ENCODE measurements at regions of chr15 and their contacts with region 1.

Region 1: GRCh38 chr15:69475769-69476358 is 23.2 kb downstream of the RPLP1 start:
- DNase-seq: peak; percentile 72
- H3K4me3 Mint-ChIP-seq: no peak overlapping the region
- H3K27ac Mint-ChIP-seq: no peak overlapping the region
- H3K4me1 Mint-ChIP-seq: no peaks in the 10 kb centered on the region
- H3K27me3 Mint-ChIP-seq: no peaks in the 10 kb centered on the region
- CTCF ChIP-seq: peak; percentile 96

Region 2: GRCh38 chr15:69265347-69265955 is 210.4 kb before region 1 on chr15:
- CTCF ChIA-PET with region 1: no interaction called
- POLR2A ChIA-PET with region 1: no interaction called
- intact Hi-C with region 1: no loop called
- DNase-seq: peak; percentile 63
- H3K4me3 Mint-ChIP-seq: no peak overlapping the region
- H3K27ac Mint-ChIP-seq: no peak overlapping the region
- H3K4me1 Mint-ChIP-seq: no peaks in the 10 kb centered on the region
- H3K27me3 Mint-ChIP-seq: no peaks in the 10 kb centered on the region
- CTCF ChIP-seq: peak; percentile 65

Region 3: GRCh38 chr15:69407753-69408385 is 68.0 kb before region 1 on chr15:
- CTCF ChIA-PET with region 1: no interaction called
- POLR2A ChIA-PET with region 1: no interaction called
- intact Hi-C with region 1: no loop called
- DNase-seq: no peak
- H3K4me3 Mint-ChIP-seq: no peak overlapping the region
- H3K27ac Mint-ChIP-seq: no peak overlapping the region
- H3K4me1 Mint-ChIP-seq: peaks cover 10% of the 10 kb centered on the region
- H3K27me3 Mint-ChIP-seq: no peaks in the 10 kb centered on the region
- CTCF ChIP-seq: no peak

Region 4: DNA sequence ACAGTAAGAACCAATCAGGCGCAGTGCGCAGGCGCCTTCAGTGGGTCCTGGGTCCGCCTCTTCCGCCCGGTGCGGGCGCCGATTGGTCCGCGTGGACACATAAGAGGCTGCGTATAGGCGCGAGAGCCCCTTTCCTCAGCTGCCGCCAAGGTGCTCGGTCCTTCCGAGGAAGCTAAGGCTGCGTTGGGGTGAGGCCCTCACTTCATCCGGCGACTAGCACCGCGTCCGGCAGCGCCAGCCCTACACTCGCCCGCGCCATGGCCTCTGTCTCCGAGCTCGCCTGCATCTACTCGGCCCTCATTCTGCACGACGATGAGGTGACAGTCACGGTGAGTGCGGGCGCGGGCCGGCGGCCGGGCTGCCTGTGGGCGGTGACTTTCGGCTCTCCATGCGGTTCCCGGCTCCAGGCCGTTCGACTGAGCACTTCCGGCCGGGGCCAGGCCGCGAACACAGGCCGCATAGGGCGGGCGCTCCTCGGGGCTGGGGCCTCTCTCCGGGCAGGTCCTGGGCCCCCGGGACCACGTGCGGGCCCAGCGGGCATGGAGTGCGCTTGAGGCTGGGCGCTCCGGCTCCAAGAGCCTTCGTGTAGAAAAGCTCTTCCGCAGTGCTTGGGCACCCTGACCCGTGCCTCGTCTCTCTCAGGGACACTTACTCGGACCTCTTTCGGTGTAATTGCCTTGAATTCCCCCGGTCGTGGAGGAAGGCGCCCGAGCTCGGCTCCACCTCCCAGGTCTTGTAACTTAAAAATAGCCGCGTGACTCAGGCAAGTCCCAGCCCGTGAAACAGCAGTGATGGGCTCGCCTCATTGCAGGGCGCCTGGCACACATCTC is 23.0 kb before region 1 on chr15 and contains the start of gene RPLP1:
- CTCF ChIA-PET with region 1: no interaction called
- POLR2A ChIA-PET with region 1: no interaction called
- intact Hi-C with region 1: no loop called
- DNase-seq: peak; percentile 95
- H3K4me3 Mint-ChIP-seq: peak within 1 kb of the TSS; percentile 95
- H3K27ac Mint-ChIP-seq: peak within 1 kb of the TSS; percentile 95
- H3K4me1 Mint-ChIP-seq: peaks cover 8% of the 10 kb centered on the region
- H3K27me3 Mint-ChIP-seq: no peaks in the 10 kb centered on the region
- CTCF ChIP-seq: no peak
- total RNA-seq, gene RPLP1: 2,295 and 2,621 TPM in 2 replicates

Region 5: DNA sequence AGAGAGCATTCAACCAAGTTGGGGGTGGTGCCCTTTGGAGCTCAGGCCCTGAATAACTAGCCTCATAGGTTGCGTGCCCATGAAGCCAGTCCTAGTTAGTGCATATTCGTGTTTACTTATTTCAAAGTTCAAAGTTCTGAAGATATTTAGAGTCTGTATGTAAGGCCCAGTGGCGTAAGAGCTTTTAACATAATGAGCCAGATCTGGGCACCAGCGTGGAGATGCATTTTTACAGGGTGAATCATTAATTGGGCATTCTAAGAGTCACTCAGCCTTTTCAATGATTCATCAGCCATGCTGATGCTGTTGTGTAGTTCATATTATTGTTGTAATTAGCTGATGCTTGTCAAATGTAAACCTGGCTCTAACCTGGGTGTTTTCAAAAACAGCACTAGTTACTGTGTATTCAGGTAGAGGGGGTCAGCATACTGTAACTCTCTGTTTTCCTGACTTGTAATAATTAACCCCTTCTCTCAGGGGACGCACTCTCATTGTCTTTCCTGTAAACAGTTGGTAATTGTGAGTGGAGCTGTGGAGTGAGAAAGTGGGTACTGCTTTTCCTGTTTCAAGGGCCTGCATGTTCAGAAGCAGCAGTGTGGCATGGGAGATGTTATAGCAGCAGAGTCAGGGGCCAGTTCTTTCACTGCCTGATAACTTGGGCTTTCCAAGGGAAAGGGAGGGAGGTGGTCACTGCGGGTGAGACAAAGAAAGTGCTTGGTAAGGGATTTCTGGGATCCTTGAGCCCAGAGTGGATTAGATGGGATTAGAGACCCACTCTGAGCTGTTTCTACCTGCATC is 81.7 kb after region 1 on chr15:
- CTCF ChIA-PET with region 1: interaction called, 6 read pairs
- POLR2A ChIA-PET with region 1: no interaction called
- intact Hi-C with region 1: loop called (anchors 5 kb)
- DNase-seq: peak; percentile 95
- H3K4me3 Mint-ChIP-seq: peak overlapping the region; percentile 35
- H3K27ac Mint-ChIP-seq: peak overlapping the region; percentile 75
- H3K4me1 Mint-ChIP-seq: peaks cover 21% of the 10 kb centered on the region
- H3K27me3 Mint-ChIP-seq: no peaks in the 10 kb centered on the region
- CTCF ChIP-seq: no peak

Region 6: GRCh38 chr15:69576035-69576526 is 100.2 kb after region 1 on chr15:
- CTCF ChIA-PET with region 1: interaction called, 15 read pairs
- POLR2A ChIA-PET with region 1: no interaction called
- intact Hi-C with region 1: loop called (anchors 5 kb)
- DNase-seq: peak; percentile 61
- H3K4me3 Mint-ChIP-seq: no peak overlapping the region
- H3K27ac Mint-ChIP-seq: no peak overlapping the region
- H3K4me1 Mint-ChIP-seq: peaks cover 21% of the 10 kb centered on the region
- H3K27me3 Mint-ChIP-seq: no peaks in the 10 kb centered on the region
- CTCF ChIP-seq: peak; percentile 82

Region 7: DNA sequence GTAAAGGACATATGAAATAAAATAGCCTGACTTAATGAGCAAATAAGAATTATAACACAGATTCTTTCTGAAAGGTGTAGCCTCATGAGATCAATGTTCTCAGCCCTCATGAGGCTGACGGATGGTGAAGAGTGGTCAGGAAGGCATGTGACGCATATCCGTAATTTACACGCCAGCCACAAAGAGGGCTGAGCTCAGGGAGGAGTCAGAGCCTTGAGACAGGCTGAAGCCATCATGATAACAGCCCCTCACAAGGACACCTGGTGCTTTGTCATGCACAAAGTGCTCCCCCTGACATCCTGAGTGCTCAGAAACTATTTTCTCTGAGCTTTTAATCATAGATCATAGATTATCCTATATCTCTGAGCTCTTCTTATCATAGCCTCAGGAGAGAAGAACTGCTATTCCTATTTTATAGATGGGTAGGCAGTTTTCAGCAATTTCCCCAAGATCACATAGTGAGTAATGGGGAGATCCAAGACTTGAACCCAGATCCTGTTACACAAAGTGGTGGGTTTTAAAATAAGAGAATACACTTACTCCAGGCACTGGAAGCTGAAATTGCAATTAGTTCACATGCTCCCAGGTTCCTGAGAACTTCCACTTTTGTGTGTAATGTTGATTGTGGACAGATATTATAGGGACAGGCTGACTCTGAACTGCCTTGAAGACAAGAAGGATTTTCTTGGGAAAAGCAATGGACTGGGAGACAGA is 243.8 kb after region 1 on chr15:
- CTCF ChIA-PET with region 1: interaction called, 3 read pairs
- POLR2A ChIA-PET with region 1: no interaction called
- intact Hi-C with region 1: loop called (anchors 5 kb)
- DNase-seq: no peak
- H3K4me3 Mint-ChIP-seq: no peak overlapping the region
- H3K27ac Mint-ChIP-seq: no peak overlapping the region
- H3K4me1 Mint-ChIP-seq: peaks cover 11% of the 10 kb centered on the region
- H3K27me3 Mint-ChIP-seq: peaks cover 34% of the 10 kb centered on the region
- CTCF ChIP-seq: no peak

Region 8: GRCh38 chr15:70466895-70467529 is 991.1 kb after region 1 on chr15:
- CTCF ChIA-PET with region 1: interaction called, 10 read pairs
- POLR2A ChIA-PET with region 1: no interaction called
- intact Hi-C with region 1: loop called (anchors 2 kb)
- DNase-seq: peak; percentile 71
- H3K4me3 Mint-ChIP-seq: no peak overlapping the region
- H3K27ac Mint-ChIP-seq: no peak overlapping the region
- H3K4me1 Mint-ChIP-seq: peaks cover 6% of the 10 kb centered on the region
- H3K27me3 Mint-ChIP-seq: peaks cover 11% of the 10 kb centered on the region
- CTCF ChIP-seq: peak; percentile 68

Region 9: GRCh38 chr15:70672081-70672480 is 1196.2 kb after region 1 on chr15:
- CTCF ChIA-PET with region 1: no interaction called
- POLR2A ChIA-PET with region 1: no interaction called
- intact Hi-C with region 1: loop called (anchors 10 kb)
- DNase-seq: no peak
- H3K4me3 Mint-ChIP-seq: no peak overlapping the region
- H3K27ac Mint-ChIP-seq: no peak overlapping the region
- H3K4me1 Mint-ChIP-seq: no peaks in the 10 kb centered on the region
- H3K27me3 Mint-ChIP-seq: no peaks in the 10 kb centered on the region
- CTCF ChIP-seq: no peak

Measured in MCF 10A (cell line).